Naive thymus-derived CD4-positive, alpha-beta T cell (primary cell): ENCODE measurements at regions of chr7 and their contacts with region 1.

Region 1: GRCh38 chr7:133230591-133231194 is 22.2 kb upstream of the EXOC4 start:
- DNase-seq: peak in 7 of 9 donors; percentile 13 to 45 (median 40)
- ATAC-seq: peak; percentile 57
- H3K4me3 ChIP-seq: no peak overlapping the region
- H3K4me3 Mint-ChIP-seq: no peak overlapping the region
- H3K27ac ChIP-seq: no peak overlapping the region
- H3K27ac Mint-ChIP-seq: no peak overlapping the region
- H3K4me1 ChIP-seq: no peaks in the 10 kb centered on the region
- H3K4me1 Mint-ChIP-seq: no peaks in the 10 kb centered on the region
- H3K27me3 ChIP-seq: no peaks in the 10 kb centered on the region
- H3K27me3 Mint-ChIP-seq: peaks cover 0 to 18% (median 0%) of the 10 kb centered on the region in 5 donors

Region 2: DNA sequence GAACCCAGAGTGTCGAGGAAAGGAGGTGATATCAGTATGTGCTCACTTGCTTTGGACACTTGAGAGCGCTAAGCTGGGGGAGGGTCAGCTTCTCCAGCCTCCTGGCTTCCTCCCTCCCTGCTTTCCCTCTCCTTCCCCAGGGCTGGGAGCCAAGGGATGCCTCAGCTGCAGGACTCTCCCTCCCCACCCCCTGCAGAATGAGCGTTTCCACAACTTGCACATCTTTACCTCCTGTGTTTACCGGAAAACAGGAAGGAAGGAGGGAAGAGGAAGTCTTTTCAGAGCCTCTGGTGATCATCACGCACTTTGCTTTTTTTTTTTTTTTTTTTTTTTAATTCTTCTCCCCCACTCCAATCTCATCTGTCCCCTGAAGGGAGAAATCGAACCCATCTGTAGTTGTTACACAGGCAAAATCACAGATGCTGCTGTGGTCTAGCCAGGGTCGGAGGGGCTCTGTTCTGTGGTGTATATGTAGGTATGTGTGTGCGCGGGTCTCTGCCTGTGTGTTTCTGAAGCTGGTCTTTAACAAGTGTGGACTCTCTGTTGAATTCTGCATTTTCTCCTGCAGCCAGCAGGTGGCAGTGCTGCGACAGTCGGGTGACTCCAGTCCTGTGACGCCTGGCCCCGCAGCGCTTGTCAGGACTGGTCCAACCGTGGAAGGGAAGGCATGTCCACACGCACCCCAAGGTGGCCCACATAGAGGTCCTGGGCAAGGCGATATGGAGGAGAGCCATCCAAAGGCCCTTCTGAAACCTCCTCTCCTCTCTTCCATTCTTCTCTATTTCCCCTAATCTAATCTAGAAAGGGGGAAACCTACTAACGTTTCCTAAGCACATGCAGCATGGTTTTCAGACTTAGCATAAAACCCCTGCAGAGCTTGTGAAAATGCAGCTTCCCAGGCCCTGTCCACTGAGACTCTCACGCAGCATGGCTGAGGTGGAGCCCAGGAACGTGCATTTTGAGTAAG is 912.1 kb before region 1 on chr7:
- CTCF ChIA-PET with region 1: no interaction called
- POLR2A ChIA-PET with region 1: no interaction called
- intact Hi-C with region 1: loop called (anchors 1 kb)
- DNase-seq: peak; percentile 56 to 82 (median 75)
- ATAC-seq: peak; percentile 89
- H3K4me3 ChIP-seq: no peak overlapping the region
- H3K4me3 Mint-ChIP-seq: peak overlapping the region; percentile 6 to 71 (median 43)
- H3K27ac ChIP-seq: no peak overlapping the region
- H3K27ac Mint-ChIP-seq: no peak overlapping the region
- H3K4me1 ChIP-seq: peaks cover 0 to 8% of the 10 kb centered on the region in 2 donors
- H3K4me1 Mint-ChIP-seq: peaks cover 4 to 23% (median 15%) of the 10 kb centered on the region in 7 donors
- H3K27me3 ChIP-seq: no peaks in the 10 kb centered on the region
- H3K27me3 Mint-ChIP-seq: peaks cover 33 to 44% (median 42%) of the 10 kb centered on the region in 5 donors

Region 3: GRCh38 chr7:133060004-133060403 is 170.7 kb before region 1 on chr7:
- CTCF ChIA-PET with region 1: no interaction called
- POLR2A ChIA-PET with region 1: no interaction called
- intact Hi-C with region 1: no loop called
- DNase-seq: no peak
- ATAC-seq: no peak
- H3K4me3 ChIP-seq: no peak overlapping the region
- H3K4me3 Mint-ChIP-seq: peak overlapping the region in 1 of 10 donors; percentile 44
- H3K27ac ChIP-seq: no peak overlapping the region
- H3K27ac Mint-ChIP-seq: no peak overlapping the region
- H3K4me1 ChIP-seq: no peaks in the 10 kb centered on the region
- H3K4me1 Mint-ChIP-seq: peaks cover 9 to 66% (median 62%) of the 10 kb centered on the region in 7 donors
- H3K27me3 ChIP-seq: no peaks in the 10 kb centered on the region
- H3K27me3 Mint-ChIP-seq: no peaks in the 10 kb centered on the region

Region 4: GRCh38 chr7:134327896-134328295 is 1097.2 kb after region 1 on chr7:
- CTCF ChIA-PET with region 1: no interaction called
- POLR2A ChIA-PET with region 1: no interaction called
- intact Hi-C with region 1: loop called in 1 of 2 experiments (anchors 5 kb)
- DNase-seq: peak in 8 of 9 donors; percentile 23 to 57 (median 46)
- ATAC-seq: peak; percentile 86
- H3K4me3 ChIP-seq: no peak overlapping the region
- H3K4me3 Mint-ChIP-seq: no peak overlapping the region
- H3K27ac ChIP-seq: no peak overlapping the region
- H3K27ac Mint-ChIP-seq: peak overlapping the region in 1 of 9 donors; percentile 22
- H3K4me1 ChIP-seq: no peaks in the 10 kb centered on the region
- H3K4me1 Mint-ChIP-seq: peaks cover 0 to 8% (median 0%) of the 10 kb centered on the region in 7 donors
- H3K27me3 ChIP-seq: no peaks in the 10 kb centered on the region
- H3K27me3 Mint-ChIP-seq: peaks cover 0 to 20% (median 12%) of the 10 kb centered on the region in 5 donors